Endothelial cell of umbilical vein (primary cell): ENCODE measurements at regions of chr13 and their contacts with region 1.

Region 1: DNA sequence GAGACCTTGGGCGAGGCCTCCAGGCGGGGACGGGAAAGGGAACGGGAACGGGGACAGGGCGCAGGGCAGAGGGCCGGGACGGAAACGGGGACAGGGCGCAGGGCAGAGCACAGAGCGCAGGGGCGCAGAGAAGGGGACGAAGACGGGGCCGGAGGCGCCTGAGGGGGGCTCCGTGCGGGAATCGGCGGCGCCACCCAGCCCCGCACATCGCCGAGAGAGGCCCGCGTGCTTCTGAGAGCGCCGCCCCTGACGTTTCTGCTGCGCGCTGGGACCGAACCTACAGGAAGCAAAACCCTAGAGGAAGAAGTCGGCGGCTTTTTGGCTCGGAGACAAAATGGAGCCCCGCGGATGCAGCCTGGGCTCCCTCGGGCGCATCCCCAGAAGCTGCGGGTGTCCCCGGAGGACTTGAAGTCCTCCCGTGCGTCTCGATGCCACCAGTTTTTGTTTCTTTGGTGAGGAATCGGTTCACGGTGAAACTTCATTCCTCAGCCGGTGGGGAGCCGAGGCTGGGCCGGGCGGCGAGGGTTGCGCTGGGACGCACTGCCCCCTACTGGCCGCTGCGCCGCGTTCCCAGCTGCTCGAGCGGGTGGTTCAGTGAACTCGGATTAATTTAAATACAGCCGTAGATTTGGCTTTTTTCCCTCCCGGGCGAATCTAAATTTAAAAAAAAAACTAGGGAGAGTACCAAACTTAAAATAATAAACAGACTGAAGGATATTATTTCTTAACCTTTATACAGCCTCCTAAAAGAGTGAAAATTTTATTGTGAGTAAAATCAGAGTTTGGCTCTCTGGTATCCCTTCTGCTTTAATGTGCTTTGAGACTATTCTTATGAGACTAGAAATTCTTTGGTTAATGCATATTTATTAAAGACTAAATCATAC is 350.0 kb upstream of the ARGLU1 start:
- DNase-seq: peak; percentile 91
- H3K4me3 ChIP-seq: peak overlapping the region; percentile 44 to 74 (median 51)
- H3K27ac ChIP-seq: peak overlapping the region; percentile 90
- H3K4me1 ChIP-seq: peaks cover 27% of the 10 kb centered on the region
- H3K27me3 ChIP-seq: peaks cover 7 to 13% of the 10 kb centered on the region in 2 experiments
- CTCF ChIP-seq: peak; percentile 92 to 97
- POLR2A ChIP-seq: peak; percentile 55

Region 2: GRCh38 chr13:105509981-105510762 is 1407.7 kb before region 1 on chr13:
- CTCF ChIA-PET with region 1: no interaction called
- POLR2A ChIA-PET with region 1: no interaction called
- dilution Hi-C with region 1: no loop called
- intact Hi-C with region 1: loop called (anchors 2 kb)
- DNase-seq: no peak
- H3K4me3 ChIP-seq: no peak overlapping the region
- H3K27ac ChIP-seq: peak overlapping the region; percentile 17
- H3K4me1 ChIP-seq: peaks cover 30% of the 10 kb centered on the region
- H3K27me3 ChIP-seq: no peaks in the 10 kb centered on the region
- CTCF ChIP-seq: no peak
- POLR2A ChIP-seq: no peak

Region 3: GRCh38 chr13:106161146-106161545 is 756.8 kb before region 1 on chr13:
- CTCF ChIA-PET with region 1: no interaction called
- POLR2A ChIA-PET with region 1: no interaction called
- dilution Hi-C with region 1: no loop called
- intact Hi-C with region 1: loop called (anchors 5 kb)
- DNase-seq: peak; percentile 78
- H3K4me3 ChIP-seq: no peak overlapping the region
- H3K27ac ChIP-seq: peak overlapping the region; percentile 40
- H3K4me1 ChIP-seq: peaks cover 20% of the 10 kb centered on the region
- H3K27me3 ChIP-seq: no peaks in the 10 kb centered on the region
- CTCF ChIP-seq: no peak
- POLR2A ChIP-seq: no peak

Region 4: DNA sequence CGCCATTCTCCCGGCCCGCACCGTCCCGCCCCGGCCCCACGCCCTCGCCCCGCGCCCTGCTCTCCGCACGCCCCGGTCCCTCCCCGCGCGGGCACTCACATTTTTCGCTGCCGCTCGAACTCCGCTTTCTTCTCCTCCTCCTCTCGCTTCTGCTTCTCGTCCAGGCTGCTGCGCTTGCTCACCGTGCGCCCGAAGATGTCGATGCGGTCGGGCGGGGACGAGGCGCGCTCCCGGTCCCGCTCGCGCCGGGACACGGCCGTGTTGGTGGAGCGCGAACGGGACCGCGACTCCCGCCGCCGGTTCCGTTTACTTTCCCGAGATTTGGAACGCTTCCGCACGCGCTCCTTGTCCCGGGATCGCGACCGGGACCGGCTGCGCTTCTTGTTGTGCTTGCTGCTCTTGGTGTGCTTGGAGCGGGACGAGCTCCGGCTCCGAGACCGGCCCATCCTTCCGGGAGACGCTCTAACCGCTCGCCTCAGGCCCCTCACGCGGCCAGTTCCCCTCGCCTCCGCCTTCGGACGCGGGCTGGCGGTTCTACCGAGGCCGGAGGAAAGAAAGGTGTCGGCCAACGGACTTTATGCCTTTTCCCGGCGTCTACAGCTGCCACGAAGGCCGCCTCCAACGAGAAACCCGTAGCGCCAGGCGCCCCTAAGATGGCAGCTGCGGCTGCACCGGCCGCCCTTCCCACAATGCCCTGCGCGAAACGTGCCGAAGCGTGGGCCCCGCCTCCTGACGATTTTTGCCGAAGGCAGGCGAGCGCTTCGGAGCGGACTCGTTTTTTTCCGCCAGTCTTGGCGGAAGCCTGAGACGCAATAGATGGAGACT is 350.2 kb before region 1 on chr13 and contains the start of gene ARGLU1:
- CTCF ChIA-PET with region 1: no interaction called
- POLR2A ChIA-PET with region 1: no interaction called
- dilution Hi-C with region 1: no loop called
- intact Hi-C with region 1: loop called (anchors 1 kb)
- DNase-seq: peak; percentile 96
- H3K4me3 ChIP-seq: peak within 1 kb of the TSS; percentile 57 to 98 (median 79)
- H3K27ac ChIP-seq: peak within 1 kb of the TSS; percentile 85
- H3K4me1 ChIP-seq: peaks cover 26% of the 10 kb centered on the region
- H3K27me3 ChIP-seq: no peaks in the 10 kb centered on the region
- CTCF ChIP-seq: no peak
- POLR2A ChIP-seq: peak; percentile 92
- total RNA-seq, gene ARGLU1: 95.7 and 111 TPM in 2 replicates

Region 5: DNA sequence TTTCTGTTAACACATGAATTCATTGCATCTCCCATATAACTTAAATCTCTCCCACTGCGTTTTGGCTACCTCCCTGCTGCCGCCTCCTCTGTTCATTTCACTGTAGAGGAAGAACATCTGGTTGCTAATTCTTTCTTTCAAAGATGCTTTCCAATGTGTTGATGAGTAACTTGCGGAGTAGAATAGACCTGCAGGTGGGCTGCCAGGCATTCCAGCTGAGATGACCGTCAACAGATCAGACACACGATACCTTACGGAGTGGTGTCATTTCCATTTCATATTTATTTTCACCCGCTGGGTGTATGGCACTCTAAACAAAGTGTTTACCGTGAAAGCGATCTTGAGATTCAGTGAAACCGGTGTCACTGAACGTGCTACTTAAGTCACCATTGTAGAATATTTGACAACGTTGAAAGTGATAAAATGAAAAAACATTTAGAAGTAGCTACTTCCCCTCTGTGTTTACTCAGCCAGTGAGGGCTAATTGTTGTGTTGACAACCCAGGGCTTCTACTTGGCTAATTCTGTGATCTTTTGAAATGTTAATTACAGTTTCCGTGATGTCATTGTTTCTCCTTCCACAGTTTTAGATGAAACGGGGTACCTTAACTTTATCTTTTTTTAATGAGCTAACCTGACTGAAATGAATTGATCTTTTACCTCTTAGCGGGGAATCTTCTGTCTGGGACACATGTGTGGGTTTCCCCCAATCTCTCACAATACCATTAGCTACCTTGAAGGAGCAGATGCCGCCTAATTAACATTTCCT is 121.5 kb before region 1 on chr13:
- CTCF ChIA-PET with region 1: no interaction called
- POLR2A ChIA-PET with region 1: no interaction called
- dilution Hi-C with region 1: no loop called
- intact Hi-C with region 1: loop called (anchors 1 kb)
- DNase-seq: peak; percentile 16
- H3K4me3 ChIP-seq: peak overlapping the region in 2 of 3 experiments; percentile 16 to 22
- H3K27ac ChIP-seq: no peak overlapping the region
- H3K4me1 ChIP-seq: no peaks in the 10 kb centered on the region
- H3K27me3 ChIP-seq: peaks cover 0 to 4% of the 10 kb centered on the region in 2 experiments
- CTCF ChIP-seq: no peak
- POLR2A ChIP-seq: no peak

Region 6: DNA sequence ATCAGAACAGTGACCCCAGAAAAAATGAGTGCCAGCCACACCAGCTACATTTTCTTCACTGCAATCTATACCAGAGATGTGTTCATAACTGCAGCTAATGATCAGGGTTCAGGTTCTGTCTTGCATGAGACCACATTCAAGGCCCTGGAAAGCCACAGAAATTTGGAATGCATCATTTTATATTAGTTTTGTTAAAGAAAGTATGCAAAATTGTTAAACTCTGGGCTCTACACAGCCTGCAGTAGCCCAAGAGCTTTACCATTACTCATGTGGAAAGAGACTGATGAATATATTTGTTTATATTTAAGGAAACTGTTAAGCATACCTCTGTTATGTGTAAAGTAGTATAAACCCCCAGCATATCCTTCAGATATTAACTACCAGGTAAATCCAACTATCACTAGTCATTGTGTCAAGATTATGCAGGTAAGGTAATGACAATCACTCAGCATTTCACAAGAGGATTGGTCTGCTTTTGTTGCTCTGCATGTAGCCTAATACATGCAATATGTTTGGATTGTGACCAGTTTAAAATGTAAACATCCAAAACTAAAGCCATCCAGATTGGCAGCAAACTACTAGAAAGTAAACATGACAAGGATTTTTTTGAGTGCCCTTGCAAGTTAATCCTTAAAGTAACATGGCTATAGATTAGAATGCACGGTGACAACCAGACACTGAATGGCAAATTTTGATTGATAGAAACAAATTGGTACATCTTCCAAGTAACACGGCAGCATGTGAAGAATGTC is 79.1 kb after region 1 on chr13:
- CTCF ChIA-PET with region 1: no interaction called
- POLR2A ChIA-PET with region 1: no interaction called
- dilution Hi-C with region 1: no loop called
- intact Hi-C with region 1: no loop called
- DNase-seq: no peak
- H3K4me3 ChIP-seq: no peak overlapping the region
- H3K27ac ChIP-seq: no peak overlapping the region
- H3K4me1 ChIP-seq: no peaks in the 10 kb centered on the region
- H3K27me3 ChIP-seq: no peaks in the 10 kb centered on the region
- CTCF ChIP-seq: no peak
- POLR2A ChIP-seq: no peak

Region 7: GRCh38 chr13:107271227-107271626 is 353.3 kb after region 1 on chr13:
- CTCF ChIA-PET with region 1: no interaction called
- POLR2A ChIA-PET with region 1: no interaction called
- dilution Hi-C with region 1: no loop called
- intact Hi-C with region 1: loop called (anchors 5 kb)
- DNase-seq: peak; percentile 90
- H3K4me3 ChIP-seq: no peak overlapping the region
- H3K27ac ChIP-seq: peak overlapping the region; percentile 39
- H3K4me1 ChIP-seq: peaks cover 14% of the 10 kb centered on the region
- H3K27me3 ChIP-seq: no peaks in the 10 kb centered on the region
- CTCF ChIP-seq: no peak
- POLR2A ChIP-seq: no peak